ENCODE measurements at regions of chr22 and their contacts with region 1.

Region 1: GRCh38 chr22:32951076-32951806 is 106.9 kb downstream of the SYN3 start:
- DNase-seq: no peak
- H3K4me3 ChIP-seq: no peak overlapping the region
- H3K27ac ChIP-seq: no peak overlapping the region
- H3K4me1 ChIP-seq: no peaks in the 10 kb centered on the region
- H3K27me3 ChIP-seq: no peaks in the 10 kb centered on the region
- CTCF ChIP-seq: no peak

Region 2: GRCh38 chr22:32518848-32519247 is 432.4 kb before region 1 on chr22:
- CTCF ChIA-PET with region 1: no interaction called
- dilution Hi-C with region 1: loop called (anchors 25 kb)
- in situ Hi-C with region 1: no loop called
- intact Hi-C with region 1: no loop called
- DNase-seq: no peak
- H3K4me3 ChIP-seq: no peak overlapping the region
- H3K27ac ChIP-seq: no peak overlapping the region
- H3K4me1 ChIP-seq: no peaks in the 10 kb centered on the region
- H3K27me3 ChIP-seq: no peaks in the 10 kb centered on the region
- CTCF ChIP-seq: peak; percentile 23 to 28

Region 3: DNA sequence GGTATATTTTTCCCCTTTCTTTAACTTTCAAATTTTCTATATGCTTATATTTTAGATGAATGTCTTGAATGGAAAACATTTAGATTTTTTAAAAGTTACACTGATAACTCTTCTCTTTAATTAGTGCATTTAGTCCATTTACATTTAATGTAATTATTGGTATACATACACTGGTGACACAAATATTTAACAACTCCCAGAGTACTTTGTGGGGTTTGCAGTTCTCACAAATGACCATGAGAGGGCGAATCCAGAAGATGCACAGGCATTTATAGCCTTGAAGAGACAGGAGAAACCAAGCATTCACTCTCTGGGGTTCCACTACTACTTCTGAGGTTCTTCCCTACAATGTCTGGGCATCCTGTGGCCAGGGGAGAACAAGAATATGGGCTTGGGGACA is 24.6 kb before region 1 on chr22:
- CTCF ChIA-PET with region 1: interaction called, 11 read pairs
- dilution Hi-C with region 1: no loop called
- in situ Hi-C with region 1: no loop called
- intact Hi-C with region 1: no loop called
- DNase-seq: peak; percentile 52
- H3K4me3 ChIP-seq: no peak overlapping the region
- H3K27ac ChIP-seq: no peak overlapping the region
- H3K4me1 ChIP-seq: no peaks in the 10 kb centered on the region
- H3K27me3 ChIP-seq: no peaks in the 10 kb centered on the region
- CTCF ChIP-seq: peak; percentile 69 to 85

Region 4: DNA sequence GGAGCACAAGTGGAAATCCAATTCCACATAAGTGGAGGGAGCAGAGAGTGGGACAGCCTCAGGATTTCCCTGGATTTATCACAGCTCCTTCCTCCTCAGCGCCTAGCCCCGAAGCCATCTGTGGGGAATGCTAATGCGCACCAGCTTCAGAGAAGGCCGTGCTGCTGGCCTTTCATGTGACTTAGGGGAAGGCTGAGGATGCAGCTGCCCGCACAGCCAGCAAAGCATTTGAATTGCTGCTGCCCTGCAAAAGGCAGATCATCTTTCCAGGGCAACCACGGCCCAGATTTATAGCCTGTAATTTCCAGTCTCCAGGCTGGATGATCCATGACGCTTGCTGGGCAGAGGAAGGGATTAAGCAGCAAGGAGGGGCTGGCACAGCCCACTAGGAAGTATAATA is 77.0 kb after region 1 on chr22:
- CTCF ChIA-PET with region 1: no interaction called
- dilution Hi-C with region 1: no loop called
- in situ Hi-C with region 1: no loop called
- intact Hi-C with region 1: no loop called
- DNase-seq: no peak
- H3K4me3 ChIP-seq: no peak overlapping the region
- H3K27ac ChIP-seq: no peak overlapping the region
- H3K4me1 ChIP-seq: no peaks in the 10 kb centered on the region
- H3K27me3 ChIP-seq: no peaks in the 10 kb centered on the region
- CTCF ChIP-seq: no peak

Region 5: DNA sequence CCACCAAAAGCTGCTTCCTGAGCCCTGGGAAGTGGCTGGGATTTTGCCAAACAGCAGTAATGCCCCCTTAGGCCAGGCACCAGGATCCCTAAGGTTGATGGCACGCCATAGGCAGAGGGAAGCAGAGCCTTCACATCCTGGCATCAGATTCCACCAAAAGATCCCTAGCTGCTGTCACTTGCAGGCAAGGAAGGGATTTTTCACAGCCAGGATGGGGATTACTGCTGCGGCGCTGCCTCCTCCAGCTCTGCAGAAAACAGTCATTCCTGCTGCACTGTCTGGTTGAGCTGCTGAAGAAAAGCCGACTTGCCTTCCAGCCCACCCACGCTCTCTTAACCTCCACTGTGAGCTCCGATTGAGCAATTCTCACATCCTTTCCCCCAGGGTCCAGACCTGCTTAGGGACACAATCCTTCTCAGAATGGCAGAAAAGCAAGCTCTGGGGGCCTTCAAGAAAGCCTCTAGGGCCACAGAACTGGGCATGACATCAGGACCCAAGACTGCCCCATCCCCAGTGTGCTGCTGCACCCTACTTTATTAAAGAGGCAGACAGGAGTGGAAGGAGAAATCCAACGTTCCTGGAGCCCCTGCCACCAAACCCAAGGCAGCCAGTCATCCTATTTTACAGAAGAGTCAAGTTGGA is 87.0 kb after region 1 on chr22:
- CTCF ChIA-PET with region 1: no interaction called
- dilution Hi-C with region 1: no loop called
- in situ Hi-C with region 1: no loop called
- intact Hi-C with region 1: no loop called
- DNase-seq: peak; percentile 27
- H3K4me3 ChIP-seq: no peak overlapping the region
- H3K27ac ChIP-seq: no peak overlapping the region
- H3K4me1 ChIP-seq: peaks cover 7% of the 10 kb centered on the region
- H3K27me3 ChIP-seq: no peaks in the 10 kb centered on the region
- CTCF ChIP-seq: no peak

Region 6: DNA sequence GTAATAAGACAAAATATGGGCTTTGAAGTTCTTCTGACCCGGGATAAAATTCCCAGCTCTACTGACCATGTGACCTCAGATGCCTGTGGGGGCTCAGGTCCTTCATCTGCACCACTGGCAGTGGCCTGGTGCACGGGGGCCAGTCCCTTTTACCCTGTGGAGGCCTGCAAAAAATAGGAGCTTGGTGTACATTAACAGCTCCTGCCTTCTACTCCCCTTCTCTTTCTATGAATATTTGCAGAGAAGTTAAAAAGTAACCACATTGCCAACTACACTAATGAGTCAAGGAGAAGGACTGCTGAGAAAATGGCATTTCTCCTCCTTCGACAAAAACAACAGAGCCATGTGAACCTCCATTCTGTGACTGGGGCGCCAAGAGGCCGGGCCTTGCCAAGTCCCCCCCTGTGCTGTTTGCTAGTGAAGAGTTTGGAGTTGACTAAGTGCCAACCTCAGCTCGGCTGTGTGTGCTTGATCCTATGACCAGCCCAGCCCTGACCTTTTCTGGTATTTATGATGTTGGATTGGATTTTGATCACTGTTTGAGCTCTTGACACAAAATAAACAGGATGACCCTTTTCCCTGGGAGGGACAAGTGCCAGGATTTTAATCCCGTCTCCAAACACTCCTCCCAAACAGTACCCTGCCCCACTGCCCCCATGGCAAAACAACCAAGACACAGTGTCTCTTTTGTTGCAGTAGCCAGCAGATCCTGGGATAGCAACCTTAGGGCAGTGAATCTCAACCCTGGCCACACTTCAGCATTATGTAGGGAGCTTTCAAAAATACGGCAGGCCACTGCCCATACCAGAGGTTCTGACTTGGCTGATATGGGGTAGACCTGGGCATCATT is 588.9 kb after region 1 on chr22:
- CTCF ChIA-PET with region 1: no interaction called
- dilution Hi-C with region 1: no loop called
- in situ Hi-C with region 1: no loop called
- intact Hi-C with region 1: no loop called
- DNase-seq: no peak
- H3K4me3 ChIP-seq: no peak overlapping the region
- H3K27ac ChIP-seq: no peak overlapping the region
- H3K4me1 ChIP-seq: no peaks in the 10 kb centered on the region
- H3K27me3 ChIP-seq: no peaks in the 10 kb centered on the region
- CTCF ChIP-seq: no peak

Measured in mammary epithelial cell (primary cell).